ENCODE measurements at regions of chr1 and their contacts with region 1.

Region 1: DNA sequence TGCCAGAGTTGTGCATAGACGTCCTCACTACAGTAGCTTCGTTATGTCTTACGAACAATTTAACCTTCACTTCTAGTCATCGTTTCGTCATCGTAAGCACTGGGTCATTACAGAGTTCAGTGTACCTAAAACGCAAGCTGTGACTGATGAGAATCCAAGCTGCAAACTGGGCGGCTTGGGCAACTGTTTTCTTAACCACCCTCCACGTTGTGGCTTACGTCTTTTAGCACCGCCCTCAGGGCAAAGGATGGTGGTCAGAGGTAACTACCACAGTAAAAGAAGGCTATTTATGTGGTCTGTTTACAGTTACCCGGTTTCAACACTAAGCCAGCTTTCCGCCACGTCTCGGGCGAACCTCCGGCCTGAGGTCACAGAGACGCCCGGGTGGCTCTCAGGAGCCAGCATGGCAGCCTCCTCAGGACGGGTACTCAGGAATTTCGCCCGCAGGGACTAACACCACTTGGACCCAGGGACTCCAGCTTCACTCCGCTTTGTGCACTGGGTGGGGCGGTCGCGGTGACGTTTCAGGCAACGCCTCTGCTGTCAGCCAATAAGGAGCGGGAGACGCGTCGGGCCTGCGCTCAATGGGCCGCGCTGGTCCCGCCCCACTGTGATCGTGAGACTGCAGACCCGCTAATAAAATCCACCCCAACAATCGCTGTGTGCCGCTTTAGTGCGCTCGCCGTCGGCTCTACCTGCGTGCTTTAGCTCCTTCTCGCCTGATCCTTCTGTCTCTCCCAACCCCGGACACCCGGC is at the start of gene CTH:
- DNase-seq: peak; percentile 82 to 96 (median 91)
- ATAC-seq: peak; percentile 94 to 100 (median 98)
- H3K4me3 ChIP-seq: peak within 1 kb of the TSS; percentile 91 to 99
- H3K4me3 Mint-ChIP-seq: peak within 1 kb of the TSS; percentile 91 to 99 (median 91)
- H3K27ac ChIP-seq: peak within 1 kb of the TSS; percentile 94
- H3K27ac Mint-ChIP-seq: peak within 1 kb of the TSS; percentile 92 to 94
- H3K4me1 ChIP-seq: peaks cover 7 to 12% of the 10 kb centered on the region in 2 experiments
- H3K4me1 Mint-ChIP-seq: peaks cover 25 to 28% (median 25%) of the 10 kb centered on the region in 3 donors
- H3K27me3 ChIP-seq: peaks cover 0 to 1% of the 10 kb centered on the region in 2 experiments
- H3K27me3 Mint-ChIP-seq: peaks cover 8% of the 10 kb centered on the region in 2 donors
- total RNA-seq, gene CTH: 2.0 to 4.5 (median 3.2) TPM

Region 2: DNA sequence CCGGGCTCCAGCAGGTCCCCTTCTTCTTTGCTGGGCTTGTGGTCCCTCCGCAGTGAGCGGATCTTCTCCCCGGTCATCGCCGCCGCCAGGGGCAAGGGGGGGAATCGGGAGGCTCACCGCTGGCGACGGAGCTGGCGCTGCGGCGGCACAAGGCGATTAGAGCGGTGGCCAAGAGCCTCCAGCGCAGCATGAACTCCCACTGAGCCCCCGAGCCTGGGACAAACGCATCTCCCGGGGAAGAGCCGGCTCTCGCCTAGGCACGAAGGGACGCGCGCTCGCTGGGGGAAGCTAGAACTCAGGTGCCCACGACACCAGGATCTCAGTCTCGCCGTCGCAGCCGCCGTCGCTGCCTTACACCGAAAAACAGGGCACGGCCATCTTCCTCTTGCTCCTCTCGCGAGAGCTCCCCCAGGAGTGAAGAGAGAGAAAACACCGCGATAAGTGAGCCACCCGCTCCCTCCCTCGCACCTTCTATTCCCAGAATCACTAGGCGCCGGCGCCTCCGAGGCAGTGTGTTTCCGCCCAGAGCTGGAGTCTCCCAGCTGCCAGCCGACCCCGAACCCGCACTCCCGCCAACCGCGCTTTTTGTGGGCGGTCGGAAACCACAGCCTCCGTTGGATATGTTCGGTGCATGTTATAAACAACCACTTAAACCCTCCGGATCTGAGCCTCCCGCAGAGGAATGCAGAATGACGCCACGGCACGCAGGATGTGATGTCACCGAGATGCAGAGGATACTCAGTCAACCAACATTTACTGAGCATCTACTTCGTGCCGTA is 56.3 kb before region 1 on chr1 and contains the start of gene ANKRD13C:
- CTCF ChIA-PET with region 1: interaction called, 3 to 29 read pairs
- POLR2A ChIA-PET with region 1: interaction called, 13 to 58 read pairs
- DNase-seq: peak; percentile 80 to 94 (median 89)
- ATAC-seq: peak; percentile 90 to 96 (median 94)
- H3K4me3 ChIP-seq: peak within 1 kb of the TSS; percentile 80 to 90
- H3K4me3 Mint-ChIP-seq: peak within 1 kb of the TSS; percentile 91 to 96 (median 94)
- H3K27ac ChIP-seq: peak within 1 kb of the TSS; percentile 89
- H3K27ac Mint-ChIP-seq: peak within 1 kb of the TSS; percentile 94 to 98
- H3K4me1 ChIP-seq: peaks cover 16 to 23% of the 10 kb centered on the region in 2 experiments
- H3K4me1 Mint-ChIP-seq: peaks cover 50 to 54% (median 53%) of the 10 kb centered on the region in 3 donors
- H3K27me3 ChIP-seq: no peaks in the 10 kb centered on the region
- H3K27me3 Mint-ChIP-seq: no peaks in the 10 kb centered on the region
- total RNA-seq, gene ANKRD13C: 26.3 to 28.7 (median 27.2) TPM

Region 3: DNA sequence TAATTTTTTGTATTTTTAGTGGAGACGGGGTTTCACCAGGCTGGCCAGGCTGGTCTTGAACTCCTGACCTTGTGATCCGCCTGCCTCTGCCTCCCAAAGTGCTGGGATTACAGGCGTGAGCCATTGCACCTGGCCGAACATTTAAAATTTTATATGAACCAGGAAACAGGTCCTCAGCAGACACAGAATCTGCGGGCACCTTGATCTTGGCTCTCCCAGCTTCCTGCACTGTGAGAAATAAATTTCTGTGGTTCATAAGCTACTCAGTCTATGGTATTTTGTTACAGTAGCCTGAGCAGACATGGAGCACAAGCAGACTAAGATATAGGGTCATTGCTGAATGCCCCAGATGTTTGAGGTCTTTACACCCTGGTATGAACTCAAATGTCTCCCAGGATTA is 23.3 kb before region 1 on chr1:
- CTCF ChIA-PET with region 1: no interaction called
- POLR2A ChIA-PET with region 1: interaction called in 1 of 2 experiments, 10 read pairs
- DNase-seq: no peak
- ATAC-seq: no peak
- H3K4me3 ChIP-seq: no peak overlapping the region
- H3K4me3 Mint-ChIP-seq: no peak overlapping the region
- H3K27ac ChIP-seq: no peak overlapping the region
- H3K27ac Mint-ChIP-seq: no peak overlapping the region
- H3K4me1 ChIP-seq: no peaks in the 10 kb centered on the region
- H3K4me1 Mint-ChIP-seq: no peaks in the 10 kb centered on the region
- H3K27me3 ChIP-seq: peaks cover 0 to 4% of the 10 kb centered on the region in 2 experiments
- H3K27me3 Mint-ChIP-seq: peaks cover 6 to 9% of the 10 kb centered on the region in 2 donors